ENCODE measurements at regions of chr12 and their contacts with region 1.

Region 1: DNA sequence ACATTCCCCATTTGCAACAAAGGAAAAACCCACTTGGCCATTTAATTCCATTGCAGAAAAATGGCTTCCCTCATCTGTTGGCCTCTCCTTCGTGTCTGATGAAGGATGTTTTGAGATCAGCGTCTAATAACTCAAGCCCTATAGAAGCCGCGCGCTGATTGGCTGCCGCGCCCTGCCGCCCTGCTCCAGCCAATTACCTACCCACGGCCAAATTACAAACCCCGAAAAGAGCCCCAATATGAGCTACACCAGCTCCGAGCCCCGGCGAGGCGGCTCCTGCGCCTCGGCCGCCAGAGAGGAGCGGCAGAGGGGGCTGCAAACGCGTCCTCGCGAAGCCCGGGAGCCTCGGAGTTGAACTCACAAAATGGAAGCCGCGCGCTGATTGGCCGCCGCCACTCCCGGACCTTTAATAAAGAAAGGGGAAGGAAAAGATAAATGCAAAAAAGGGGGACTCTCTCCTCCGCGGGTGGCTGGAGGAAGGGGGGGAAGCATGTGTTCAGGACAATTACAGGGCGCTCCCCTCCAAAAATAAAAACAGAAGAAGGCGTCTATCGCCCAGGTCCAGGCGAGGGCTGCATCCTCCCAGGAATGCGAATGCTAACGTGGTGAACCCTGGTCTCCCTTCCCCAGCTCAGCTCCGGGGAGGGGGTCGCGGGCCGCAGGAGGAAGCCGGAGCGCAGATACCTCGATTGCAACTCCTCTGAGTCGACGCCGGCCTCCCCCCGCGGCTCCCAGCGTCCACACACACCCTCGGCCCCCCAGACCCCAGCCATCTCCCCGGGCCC is 771 bp upstream of the SETD1B start:
- DNase-seq: peak; percentile 92 to 95
- H3K4me3 ChIP-seq: peak overlapping the region; percentile 80
- H3K4me3 Mint-ChIP-seq: peak overlapping the region; percentile 81
- H3K27ac Mint-ChIP-seq: peak overlapping the region; percentile 96
- H3K4me1 ChIP-seq: peaks cover 20% of the 10 kb centered on the region
- H3K4me1 Mint-ChIP-seq: peaks cover 20% of the 10 kb centered on the region
- H3K27me3 ChIP-seq: no peaks in the 10 kb centered on the region
- H3K27me3 Mint-ChIP-seq: no peaks in the 10 kb centered on the region
- CTCF ChIP-seq: no peak

Region 2: GRCh38 chr12:121688966-121689365 is 114.1 kb before region 1 on chr12:
- CTCF ChIA-PET with region 1: interaction called, 3 read pairs
- POLR2A ChIA-PET with region 1: interaction called, 10 read pairs
- intact Hi-C with region 1: no loop called
- DNase-seq: no peak
- H3K4me3 ChIP-seq: no peak overlapping the region
- H3K4me3 Mint-ChIP-seq: no peak overlapping the region
- H3K27ac Mint-ChIP-seq: no peak overlapping the region
- H3K4me1 ChIP-seq: no peaks in the 10 kb centered on the region
- H3K4me1 Mint-ChIP-seq: no peaks in the 10 kb centered on the region
- H3K27me3 ChIP-seq: no peaks in the 10 kb centered on the region
- H3K27me3 Mint-ChIP-seq: no peaks in the 10 kb centered on the region
- CTCF ChIP-seq: no peak

Region 3: GRCh38 chr12:121888478-121889266 is 85.6 kb after region 1 on chr12 and contains the start of gene PSMD9:
- CTCF ChIA-PET with region 1: interaction called, 5 read pairs
- POLR2A ChIA-PET with region 1: interaction called, 11 read pairs
- intact Hi-C with region 1: no loop called
- DNase-seq: peak; percentile 98 to 99
- H3K4me3 ChIP-seq: peak within 1 kb of the TSS; percentile 84
- H3K4me3 Mint-ChIP-seq: peak within 1 kb of the TSS; percentile 84
- H3K27ac Mint-ChIP-seq: peak within 1 kb of the TSS; percentile 86
- H3K4me1 ChIP-seq: peaks cover 10% of the 10 kb centered on the region
- H3K4me1 Mint-ChIP-seq: peaks cover 15% of the 10 kb centered on the region
- H3K27me3 ChIP-seq: no peaks in the 10 kb centered on the region
- H3K27me3 Mint-ChIP-seq: no peaks in the 10 kb centered on the region
- CTCF ChIP-seq: peak; percentile 50 to 78
- total RNA-seq, gene PSMD9: 53.0 and 63.3 TPM in 2 replicates

Region 4: GRCh38 chr12:121918679-121919038 is 115.6 kb after region 1 on chr12:
- CTCF ChIA-PET with region 1: no interaction called
- POLR2A ChIA-PET with region 1: interaction called, 19 read pairs
- intact Hi-C with region 1: no loop called
- DNase-seq: no peak
- H3K4me3 ChIP-seq: peak overlapping the region; percentile 17; the same call in 1 of the 2 replicates
- H3K4me3 Mint-ChIP-seq: no peak overlapping the region
- H3K27ac Mint-ChIP-seq: no peak overlapping the region
- H3K4me1 ChIP-seq: no peaks in the 10 kb centered on the region
- H3K4me1 Mint-ChIP-seq: peaks cover 2% of the 10 kb centered on the region
- H3K27me3 ChIP-seq: no peaks in the 10 kb centered on the region
- H3K27me3 Mint-ChIP-seq: no peaks in the 10 kb centered on the region
- CTCF ChIP-seq: no peak

Region 5: DNA sequence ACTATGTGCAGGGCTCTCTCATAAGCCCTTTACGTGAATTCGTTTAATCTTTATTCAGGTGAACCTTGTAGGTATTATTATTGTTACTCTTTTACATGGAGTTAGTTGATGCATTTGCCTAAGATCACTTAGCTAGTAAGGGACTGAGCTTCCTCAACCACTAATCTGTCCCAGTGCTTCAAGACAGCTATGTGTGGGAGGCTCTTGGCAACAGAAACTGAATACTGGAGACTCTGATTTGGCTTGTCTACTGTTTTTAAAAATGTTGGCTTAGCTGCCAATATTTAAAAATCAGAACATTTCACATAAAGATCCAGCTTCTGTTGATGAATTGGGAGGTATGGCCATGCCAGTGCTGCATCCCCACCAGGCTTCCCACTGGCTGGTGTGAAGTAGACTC is 730.8 kb after region 1 on chr12:
- CTCF ChIA-PET with region 1: no interaction called
- POLR2A ChIA-PET with region 1: no interaction called
- intact Hi-C with region 1: loop called (anchors 10 kb)
- DNase-seq: no peak
- H3K4me3 ChIP-seq: no peak overlapping the region
- H3K4me3 Mint-ChIP-seq: no peak overlapping the region
- H3K27ac Mint-ChIP-seq: no peak overlapping the region
- H3K4me1 ChIP-seq: no peaks in the 10 kb centered on the region
- H3K4me1 Mint-ChIP-seq: peaks cover 6% of the 10 kb centered on the region
- H3K27me3 ChIP-seq: no peaks in the 10 kb centered on the region
- H3K27me3 Mint-ChIP-seq: no peaks in the 10 kb centered on the region
- CTCF ChIP-seq: no peak